MCF 10A (cell line): ENCODE measurements at regions of chr3 and their contacts with region 1.

Region 1: GRCh38 chr3:72379500-72380187 is 468.6 kb downstream of the SHQ1 start:
- DNase-seq: peak; percentile 45
- H3K4me3 Mint-ChIP-seq: no peak overlapping the region
- H3K27ac Mint-ChIP-seq: peak overlapping the region; percentile 75
- H3K4me1 Mint-ChIP-seq: peaks cover 35% of the 10 kb centered on the region
- H3K27me3 Mint-ChIP-seq: no peaks in the 10 kb centered on the region
- CTCF ChIP-seq: no peak

Region 2: DNA sequence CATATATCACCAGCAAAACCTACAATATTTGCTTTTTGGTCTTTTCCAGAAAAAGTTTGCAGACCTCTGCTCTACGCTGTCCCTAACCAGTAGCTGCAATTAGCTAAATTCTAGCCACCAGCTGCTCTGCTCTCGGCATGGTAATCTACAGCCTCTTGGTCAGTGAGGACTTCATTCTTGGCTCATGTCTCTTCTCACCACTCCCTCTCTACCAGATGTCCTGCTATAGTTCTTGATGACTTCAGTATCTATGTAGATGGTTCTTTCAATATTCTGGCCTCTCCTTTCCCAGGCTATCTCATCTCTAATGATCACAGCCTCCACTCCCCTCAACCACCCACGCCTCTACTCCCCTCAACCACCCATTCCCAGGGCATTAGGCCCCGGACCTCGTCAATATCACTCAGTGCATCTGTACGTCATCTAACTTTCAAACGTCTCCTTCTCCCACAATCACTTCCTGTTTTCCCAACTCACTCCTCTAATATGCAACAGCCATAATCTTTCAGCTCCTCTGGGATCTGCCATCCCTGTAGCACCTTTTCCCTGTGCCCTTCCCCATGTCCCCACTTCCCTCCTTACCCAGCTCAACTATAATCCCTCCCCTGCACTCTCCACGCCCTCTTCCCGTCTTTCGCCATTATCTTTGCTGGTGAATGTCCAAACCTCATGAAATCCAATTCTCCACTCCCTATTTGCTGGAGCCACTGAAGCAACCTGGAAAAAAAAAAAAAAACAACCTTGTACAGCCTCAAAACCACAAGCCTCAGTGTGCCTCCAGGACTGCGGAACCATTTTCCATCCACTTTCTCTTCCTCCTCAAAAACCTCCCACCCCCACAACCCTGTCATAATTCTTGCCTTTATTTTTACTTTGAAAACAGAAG is 165.3 kb before region 1 on chr3:
- CTCF ChIA-PET with region 1: no interaction called
- POLR2A ChIA-PET with region 1: no interaction called
- intact Hi-C with region 1: no loop called
- DNase-seq: no peak
- H3K4me3 Mint-ChIP-seq: no peak overlapping the region
- H3K27ac Mint-ChIP-seq: no peak overlapping the region
- H3K4me1 Mint-ChIP-seq: no peaks in the 10 kb centered on the region
- H3K27me3 Mint-ChIP-seq: peaks cover 9% of the 10 kb centered on the region
- CTCF ChIP-seq: no peak

Region 3: DNA sequence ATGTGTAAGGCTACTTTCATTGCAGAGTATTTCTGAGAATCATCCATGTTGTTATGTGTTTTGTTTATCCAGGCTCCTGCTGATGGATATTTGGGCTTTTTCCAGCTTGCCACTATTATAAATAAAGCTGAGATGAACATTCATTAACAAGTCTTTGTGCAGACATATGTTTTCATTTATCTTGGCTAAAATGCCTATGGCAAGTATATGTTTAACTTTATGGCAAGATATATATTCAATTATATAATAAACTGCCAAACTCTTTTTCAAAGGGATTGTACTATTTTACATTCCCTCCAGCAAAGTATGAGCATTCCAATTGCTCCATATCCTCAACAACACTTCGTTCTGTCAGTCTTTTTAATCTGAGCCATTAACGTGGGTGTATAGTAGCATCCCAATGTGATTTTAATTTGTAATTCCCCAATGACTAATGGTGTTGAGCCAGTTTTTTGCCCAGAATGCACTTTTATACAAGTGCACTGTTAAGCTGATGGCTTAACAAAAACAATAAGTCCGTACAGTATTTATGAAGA is 16.2 kb after region 1 on chr3:
- CTCF ChIA-PET with region 1: interaction called, 4 read pairs
- POLR2A ChIA-PET with region 1: interaction called, 10 read pairs
- intact Hi-C with region 1: no loop called
- DNase-seq: no peak
- H3K4me3 Mint-ChIP-seq: no peak overlapping the region
- H3K27ac Mint-ChIP-seq: no peak overlapping the region
- H3K4me1 Mint-ChIP-seq: peaks cover 6% of the 10 kb centered on the region
- H3K27me3 Mint-ChIP-seq: no peaks in the 10 kb centered on the region
- CTCF ChIP-seq: no peak

Region 4: DNA sequence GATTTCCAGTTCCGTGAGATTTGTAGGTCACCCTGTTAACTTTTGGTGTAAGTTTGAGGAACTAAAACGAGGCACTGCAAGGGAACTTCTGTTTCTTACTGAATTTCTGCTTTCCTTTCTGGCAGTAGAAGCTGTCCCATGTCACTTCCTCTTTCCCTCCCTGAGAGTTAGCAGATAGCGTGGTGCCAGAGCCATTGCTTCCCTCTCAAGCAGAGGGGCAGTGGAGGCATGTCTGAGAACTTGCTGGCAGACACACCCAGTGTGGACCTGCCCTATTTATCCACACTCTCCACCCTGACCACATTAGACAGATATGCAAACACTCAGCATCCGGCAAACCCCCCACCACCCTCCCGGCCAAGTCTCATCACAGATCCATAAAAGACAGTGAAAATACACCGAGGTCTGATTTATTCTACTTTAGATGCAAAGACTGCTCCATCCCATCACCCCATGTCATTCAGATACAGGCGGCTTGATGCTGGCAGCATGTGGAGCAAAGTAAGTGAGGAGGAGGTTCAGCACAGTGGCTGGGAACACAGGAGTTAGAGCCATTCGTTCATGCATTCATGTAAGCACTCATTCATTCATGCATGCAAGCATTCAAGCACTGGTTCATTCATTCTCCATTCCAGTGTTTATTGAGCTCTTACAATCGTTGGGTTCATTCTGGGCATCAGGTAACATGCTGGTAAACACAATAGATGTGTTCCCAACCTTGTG is 143.9 kb after region 1 on chr3:
- CTCF ChIA-PET with region 1: no interaction called
- POLR2A ChIA-PET with region 1: no interaction called
- intact Hi-C with region 1: no loop called
- DNase-seq: no peak
- H3K4me3 Mint-ChIP-seq: no peak overlapping the region
- H3K27ac Mint-ChIP-seq: no peak overlapping the region
- H3K4me1 Mint-ChIP-seq: peaks cover 13% of the 10 kb centered on the region
- H3K27me3 Mint-ChIP-seq: no peaks in the 10 kb centered on the region
- CTCF ChIP-seq: no peak